T-cell (primary cell): ENCODE measurements at regions of chr16 and their contacts with region 1.

Region 1: GRCh38 chr16:65373097-65373496 is 251.2 kb upstream of the CDH11 start:
- DNase-seq: no peak
- ATAC-seq: no peak
- H3K4me3 ChIP-seq: no peak overlapping the region
- H3K4me3 Mint-ChIP-seq: no peak overlapping the region
- H3K27ac ChIP-seq: no peak overlapping the region
- H3K27ac Mint-ChIP-seq: no peak overlapping the region
- H3K4me1 ChIP-seq: no peaks in the 10 kb centered on the region
- H3K4me1 Mint-ChIP-seq: no peaks in the 10 kb centered on the region
- H3K27me3 ChIP-seq: no peaks in the 10 kb centered on the region
- H3K27me3 Mint-ChIP-seq: no peaks in the 10 kb centered on the region

Region 2: GRCh38 chr16:64809876-64810629 is 563.0 kb before region 1 on chr16:
- CTCF ChIA-PET with region 1: no interaction called
- POLR2A ChIA-PET with region 1: interaction called in 1 of 2 experiments, 10 read pairs
- DNase-seq: no peak
- ATAC-seq: no peak
- H3K4me3 ChIP-seq: no peak overlapping the region
- H3K4me3 Mint-ChIP-seq: no peak overlapping the region
- H3K27ac ChIP-seq: no peak overlapping the region
- H3K27ac Mint-ChIP-seq: no peak overlapping the region
- H3K4me1 ChIP-seq: no peaks in the 10 kb centered on the region
- H3K4me1 Mint-ChIP-seq: no peaks in the 10 kb centered on the region
- H3K27me3 ChIP-seq: no peaks in the 10 kb centered on the region
- H3K27me3 Mint-ChIP-seq: no peaks in the 10 kb centered on the region

Region 3: GRCh38 chr16:65229191-65229662 is 143.9 kb before region 1 on chr16:
- CTCF ChIA-PET with region 1: no interaction called
- POLR2A ChIA-PET with region 1: no interaction called
- DNase-seq: no peak
- ATAC-seq: no peak
- H3K4me3 ChIP-seq: no peak overlapping the region
- H3K4me3 Mint-ChIP-seq: no peak overlapping the region
- H3K27ac ChIP-seq: no peak overlapping the region
- H3K27ac Mint-ChIP-seq: no peak overlapping the region
- H3K4me1 ChIP-seq: no peaks in the 10 kb centered on the region
- H3K4me1 Mint-ChIP-seq: no peaks in the 10 kb centered on the region
- H3K27me3 ChIP-seq: no peaks in the 10 kb centered on the region
- H3K27me3 Mint-ChIP-seq: no peaks in the 10 kb centered on the region

Region 4: GRCh38 chr16:65342231-65342866 is 30.7 kb before region 1 on chr16:
- CTCF ChIA-PET with region 1: no interaction called
- POLR2A ChIA-PET with region 1: no interaction called
- DNase-seq: no peak
- ATAC-seq: no peak
- H3K4me3 ChIP-seq: no peak overlapping the region
- H3K4me3 Mint-ChIP-seq: no peak overlapping the region
- H3K27ac ChIP-seq: no peak overlapping the region
- H3K27ac Mint-ChIP-seq: no peak overlapping the region
- H3K4me1 ChIP-seq: no peaks in the 10 kb centered on the region
- H3K4me1 Mint-ChIP-seq: no peaks in the 10 kb centered on the region
- H3K27me3 ChIP-seq: no peaks in the 10 kb centered on the region
- H3K27me3 Mint-ChIP-seq: no peaks in the 10 kb centered on the region